Activated B cell treated with CpG ODN at 0.5 μM for 24 hours (primary cell): ENCODE measurements at regions of chr15 and their contacts with region 1.

Region 1: DNA sequence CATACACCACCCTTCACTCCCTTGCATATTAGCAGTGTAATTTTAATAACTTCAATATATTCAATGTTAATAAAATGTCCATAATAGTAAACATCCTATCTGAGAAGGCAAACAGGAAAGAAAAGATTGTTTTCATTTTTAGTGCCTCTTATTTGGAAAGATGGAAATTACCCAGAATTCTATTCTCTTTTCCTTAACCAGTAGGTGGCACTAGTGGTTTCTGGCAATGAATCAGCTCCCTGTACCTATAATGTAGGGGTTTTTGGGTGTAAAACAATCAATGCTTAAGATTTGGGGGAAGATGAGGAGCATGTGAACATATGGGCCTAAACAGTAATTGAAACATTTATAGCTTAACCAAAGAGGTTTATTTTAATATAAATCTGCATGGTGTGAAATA is 5.7 kb upstream of the SEMA6D start:
- DNase-seq: no peak
- ATAC-seq: no peak
- H3K4me3 Mint-ChIP-seq: no peak overlapping the region
- H3K27ac Mint-ChIP-seq: no peak overlapping the region
- H3K4me1 Mint-ChIP-seq: no peaks in the 10 kb centered on the region
- H3K27me3 Mint-ChIP-seq: peaks cover 21% of the 10 kb centered on the region
- CTCF ChIP-seq: no peak

Region 2: GRCh38 chr15:47987908-47988532 is 276.4 kb after region 1 on chr15:
- CTCF ChIA-PET with region 1: interaction called, 12 read pairs
- POLR2A ChIA-PET with region 1: no interaction called
- intact Hi-C with region 1: loop called (anchors 1 kb)
- DNase-seq: no peak
- ATAC-seq: no peak
- H3K4me3 Mint-ChIP-seq: no peak overlapping the region
- H3K27ac Mint-ChIP-seq: no peak overlapping the region
- H3K4me1 Mint-ChIP-seq: no peaks in the 10 kb centered on the region
- H3K27me3 Mint-ChIP-seq: peaks cover 2% of the 10 kb centered on the region
- CTCF ChIP-seq: no peak

Region 3: DNA sequence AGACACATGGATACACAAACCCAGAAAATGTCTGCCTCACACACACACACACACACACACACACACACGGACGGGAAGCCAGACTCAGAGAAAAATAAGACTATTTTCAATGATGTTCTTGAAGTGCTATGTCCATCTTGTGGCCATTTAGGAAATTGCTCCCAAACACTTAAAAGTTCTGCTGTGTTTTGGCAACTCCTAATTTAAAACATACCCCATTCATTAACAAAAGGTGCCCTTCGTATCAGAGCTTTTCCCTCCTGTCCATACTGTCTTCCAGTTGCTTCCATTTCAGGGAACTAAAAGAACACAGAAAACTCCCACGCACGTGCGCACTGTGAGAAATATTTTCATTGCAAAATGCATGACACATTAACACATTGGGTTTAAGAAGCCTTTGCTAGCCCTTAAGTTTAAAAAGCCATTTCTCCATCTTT is 539.0 kb after region 1 on chr15:
- CTCF ChIA-PET with region 1: no interaction called
- POLR2A ChIA-PET with region 1: no interaction called
- intact Hi-C with region 1: loop called (anchors 5 kb)
- DNase-seq: no peak
- ATAC-seq: no peak
- H3K4me3 Mint-ChIP-seq: no peak overlapping the region
- H3K27ac Mint-ChIP-seq: no peak overlapping the region
- H3K4me1 Mint-ChIP-seq: no peaks in the 10 kb centered on the region
- H3K27me3 Mint-ChIP-seq: peaks cover 9% of the 10 kb centered on the region
- CTCF ChIP-seq: no peak